CD4-positive, alpha-beta memory T cell (primary cell): ENCODE measurements at regions of chr5 and their contacts with region 1.

Region 1: DNA sequence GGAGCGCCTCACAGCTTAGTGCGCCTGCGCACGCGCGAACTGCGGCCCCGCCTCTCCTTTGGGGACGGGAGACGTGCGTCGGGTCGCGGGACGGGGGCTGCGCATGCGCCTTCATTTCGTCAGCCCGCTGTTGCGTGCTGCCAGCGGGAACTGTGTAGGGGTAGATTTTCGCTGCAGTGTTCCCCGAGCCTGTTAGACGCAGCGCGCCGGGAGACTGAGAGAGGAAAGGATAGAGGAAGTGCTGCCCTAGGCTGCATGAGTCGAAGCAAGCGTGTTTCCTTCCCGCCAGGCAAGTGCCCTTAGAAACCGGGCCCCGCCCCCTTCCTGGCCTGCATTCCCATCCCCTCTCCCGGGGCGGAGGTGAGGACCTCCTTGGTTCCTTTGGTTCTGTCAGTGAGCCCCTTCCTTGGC is 12.3 kb downstream of the ITGA1 start:
- DNase-seq: peak; percentile 92 to 95 (median 94)
- H3K4me3 ChIP-seq: peak overlapping the region; percentile 78 to 98
- H3K4me3 Mint-ChIP-seq: peak overlapping the region; percentile 93 to 99 (median 98)
- H3K27ac ChIP-seq: peak overlapping the region; percentile 72
- H3K27ac Mint-ChIP-seq: peak overlapping the region; percentile 90 to 99 (median 96)
- H3K4me1 ChIP-seq: peaks cover 49% of the 10 kb centered on the region
- H3K4me1 Mint-ChIP-seq: peaks cover 37 to 67% (median 49%) of the 10 kb centered on the region in 4 donors
- H3K27me3 ChIP-seq: no peaks in the 10 kb centered on the region
- H3K27me3 Mint-ChIP-seq: no peaks in the 10 kb centered on the region

Region 2: GRCh38 chr5:52771343-52772039 is 28.5 kb before region 1 on chr5:
- CTCF ChIA-PET with region 1: interaction called, 9 read pairs
- POLR2A ChIA-PET with region 1: interaction called, 11 read pairs
- intact Hi-C with region 1: no loop called
- DNase-seq: peak in 4 of 5 donors; percentile 25 to 40 (median 29)
- H3K4me3 ChIP-seq: no peak overlapping the region
- H3K4me3 Mint-ChIP-seq: peak overlapping the region in 7 of 8 donors; percentile 29 to 84 (median 63)
- H3K27ac ChIP-seq: peak overlapping the region; percentile 16
- H3K27ac Mint-ChIP-seq: peak overlapping the region; percentile 24 to 87 (median 81)
- H3K4me1 ChIP-seq: peaks cover 50% of the 10 kb centered on the region
- H3K4me1 Mint-ChIP-seq: peaks cover 31 to 45% (median 42%) of the 10 kb centered on the region in 4 donors
- H3K27me3 ChIP-seq: no peaks in the 10 kb centered on the region
- H3K27me3 Mint-ChIP-seq: peaks cover 0 to 2% of the 10 kb centered on the region in 2 donors

Region 3: DNA sequence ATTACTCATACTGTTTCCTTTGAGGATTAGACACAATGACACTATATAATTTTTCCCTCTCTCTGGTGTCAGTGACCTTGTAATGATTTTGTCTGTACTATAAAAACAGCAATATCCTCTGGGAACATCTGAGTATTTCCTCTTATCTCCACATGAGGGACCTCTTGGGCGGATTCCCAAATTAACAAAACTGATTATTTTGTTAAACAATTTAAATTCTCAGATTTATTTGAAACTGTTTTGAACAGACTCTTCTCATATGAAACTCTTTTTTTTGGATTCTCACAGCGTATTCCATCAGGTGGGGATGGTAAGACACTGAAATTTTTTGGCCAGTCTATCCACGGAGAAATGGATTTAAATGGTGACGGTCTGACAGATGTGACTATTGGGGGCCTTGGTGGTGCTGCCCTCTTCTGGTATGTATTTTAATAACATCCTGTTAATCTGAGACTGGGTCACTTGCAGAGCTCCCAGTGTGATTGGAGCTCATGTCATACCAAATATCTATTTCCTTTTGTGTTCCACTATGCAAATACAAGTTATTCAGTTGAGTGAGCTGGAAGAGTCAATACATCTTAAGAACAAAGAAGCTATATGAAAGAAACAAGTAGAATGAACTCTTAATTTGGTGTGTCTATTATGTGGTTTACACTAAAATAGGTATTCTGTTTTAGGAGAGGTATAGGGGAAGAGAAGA is 115.3 kb after region 1 on chr5:
- CTCF ChIA-PET with region 1: interaction called, 6 read pairs
- POLR2A ChIA-PET with region 1: no interaction called
- intact Hi-C with region 1: loop called (anchors 5 kb)
- DNase-seq: peak; percentile 41 to 72 (median 67)
- H3K4me3 ChIP-seq: no peak overlapping the region
- H3K4me3 Mint-ChIP-seq: peak overlapping the region in 7 of 8 donors; percentile 58 to 77 (median 74)
- H3K27ac ChIP-seq: no peak overlapping the region
- H3K27ac Mint-ChIP-seq: peak overlapping the region in 1 of 7 donors; percentile 39
- H3K4me1 ChIP-seq: peaks cover 5% of the 10 kb centered on the region
- H3K4me1 Mint-ChIP-seq: peaks cover 0 to 9% (median 2%) of the 10 kb centered on the region in 4 donors
- H3K27me3 ChIP-seq: no peaks in the 10 kb centered on the region
- H3K27me3 Mint-ChIP-seq: no peaks in the 10 kb centered on the region

Region 4: DNA sequence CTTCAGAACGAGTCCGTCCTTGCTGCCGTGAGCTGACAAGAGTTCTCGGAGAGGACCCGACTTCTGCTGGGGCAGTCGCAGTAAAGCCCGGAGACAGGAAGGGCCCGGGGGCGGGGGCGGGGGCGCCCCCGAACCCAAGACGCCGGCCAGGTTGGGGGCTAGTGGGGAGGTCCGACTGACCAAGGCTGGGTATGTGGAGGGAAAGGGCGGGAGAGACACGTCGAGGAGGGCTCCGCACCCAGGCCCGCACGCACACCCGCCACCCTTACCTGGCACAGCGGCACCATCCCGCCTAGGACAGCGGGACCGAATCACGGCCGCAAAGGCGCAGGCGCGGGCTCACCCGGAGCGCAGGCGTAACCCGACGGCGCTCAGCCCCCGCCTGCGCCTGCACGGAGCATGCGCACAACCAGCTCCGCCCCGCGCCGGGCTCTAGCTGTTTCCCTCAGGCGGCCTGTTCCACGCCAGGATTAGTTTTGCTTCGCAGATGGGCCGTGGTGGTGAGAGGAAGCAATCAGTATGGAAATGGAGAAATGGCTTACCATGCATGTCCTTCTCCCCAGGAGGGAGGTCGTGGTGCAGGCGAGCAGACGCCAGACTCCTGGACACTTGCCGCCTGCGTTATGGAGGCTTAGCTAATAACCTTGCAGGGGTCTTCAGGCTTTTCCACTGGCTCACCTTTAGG is 309.6 kb after region 1 on chr5 and contains the start of gene MOCS2:
- CTCF ChIA-PET with region 1: no interaction called
- POLR2A ChIA-PET with region 1: interaction called, 6 read pairs
- intact Hi-C with region 1: loop called (anchors 5 kb)
- DNase-seq: peak; percentile 86 to 93 (median 91)
- H3K4me3 ChIP-seq: peak within 1 kb of the TSS; percentile 82 to 97
- H3K4me3 Mint-ChIP-seq: peak within 1 kb of the TSS; percentile 90 to 98 (median 95)
- H3K27ac ChIP-seq: peak within 1 kb of the TSS; percentile 68
- H3K27ac Mint-ChIP-seq: peak within 1 kb of the TSS; percentile 75 to 97 (median 95)
- H3K4me1 ChIP-seq: peaks cover 34% of the 10 kb centered on the region
- H3K4me1 Mint-ChIP-seq: peaks cover 31 to 59% (median 40%) of the 10 kb centered on the region in 4 donors
- H3K27me3 ChIP-seq: no peaks in the 10 kb centered on the region
- H3K27me3 Mint-ChIP-seq: no peaks in the 10 kb centered on the region
- total RNA-seq, gene MOCS2: 23.1 to 26.6 TPM